Astrocyte of the cerebellum (primary cell): ENCODE measurements at regions of chr11 and their contacts with region 1.

Region 1: GRCh38 chr11:33692013-33692504 is 8.6 kb downstream of the C11orf91 start:
- DNase-seq: peak; percentile 99
- H3K4me3 ChIP-seq: peak overlapping the region; percentile 10
- CTCF ChIP-seq: no peak

Region 2: DNA sequence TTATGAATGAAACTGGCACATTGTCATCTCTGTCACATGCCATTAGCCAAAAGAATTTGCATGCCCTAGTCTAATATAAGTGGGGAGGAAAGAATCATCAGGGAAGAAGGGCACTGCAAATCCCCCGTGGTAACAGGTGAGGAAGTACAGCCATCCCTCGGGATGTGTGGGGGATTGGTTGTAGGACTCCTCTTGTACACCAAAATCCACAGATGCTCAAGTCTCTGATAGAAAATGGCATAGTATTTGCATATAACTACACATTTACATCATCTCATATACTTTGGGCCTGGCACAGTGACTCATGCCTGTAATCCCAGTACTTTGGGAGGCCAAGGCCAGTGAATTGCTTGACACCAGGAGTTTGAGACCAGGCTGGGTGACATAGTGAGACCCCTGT is 325.1 kb before region 1 on chr11:
- in situ Hi-C with region 1: loop called (anchors 5 kb)
- DNase-seq: no peak
- H3K4me3 ChIP-seq: no peak overlapping the region
- CTCF ChIP-seq: no peak